ENCODE measurements at regions of chr1 and their contacts with region 1.

Region 1: DNA sequence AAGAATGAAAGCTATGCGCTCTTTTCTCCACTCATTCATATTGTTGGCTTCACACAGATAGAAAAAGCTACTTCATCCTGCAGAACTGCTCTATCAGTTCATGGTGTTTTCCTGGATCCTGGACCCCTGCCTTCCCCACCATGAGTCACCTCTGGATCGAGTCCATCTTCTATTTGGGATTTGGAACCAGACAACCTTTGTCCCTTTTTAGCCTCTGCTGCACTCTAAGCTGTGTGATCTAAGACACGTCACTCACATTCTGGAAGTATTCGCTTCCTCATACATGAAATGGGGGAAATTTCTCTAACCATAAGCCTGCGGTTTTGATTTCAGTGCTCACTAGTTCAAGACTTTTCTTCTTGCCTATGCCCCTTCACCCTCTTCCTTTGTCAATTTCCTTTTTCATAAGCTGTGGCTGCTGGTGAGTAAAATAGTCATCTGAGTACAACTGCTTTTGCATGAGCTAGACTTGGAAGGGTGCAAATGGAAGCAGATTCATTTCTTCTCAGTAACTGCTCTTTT is 14.1 kb upstream of the DEGS1 start:
- DNase-seq: peak; percentile 59
- H3K4me3 Mint-ChIP-seq: peak overlapping the region; percentile 60
- H3K27ac Mint-ChIP-seq: peak overlapping the region; percentile 76
- H3K4me1 Mint-ChIP-seq: peaks cover 38% of the 10 kb centered on the region
- H3K27me3 Mint-ChIP-seq: peaks cover 2% of the 10 kb centered on the region

Region 2: DNA sequence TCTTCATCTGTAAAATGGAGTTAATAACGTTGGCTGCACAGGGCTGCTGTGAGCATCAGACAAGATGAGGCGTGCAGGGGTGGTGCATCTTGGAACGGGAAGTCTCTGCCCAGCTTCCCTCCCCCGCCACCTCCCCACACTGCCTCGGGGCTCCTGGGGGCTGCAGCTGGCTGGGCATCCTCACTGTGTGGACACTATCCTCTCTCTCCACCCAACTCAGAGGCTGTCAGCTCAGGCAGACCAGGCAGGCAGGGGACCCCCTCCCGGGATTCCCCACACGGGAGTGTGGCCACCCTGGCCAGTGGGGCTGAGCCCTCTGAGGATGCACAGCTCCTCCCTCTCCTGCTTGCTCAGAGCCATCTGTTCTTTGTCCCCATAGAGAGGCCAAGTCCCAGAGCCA is 653.0 kb before region 1 on chr1:
- intact Hi-C with region 1: no loop called
- DNase-seq: no peak
- H3K4me3 Mint-ChIP-seq: peak overlapping the region; percentile 26
- H3K27ac Mint-ChIP-seq: peak overlapping the region; percentile 65
- H3K4me1 Mint-ChIP-seq: peaks cover 28% of the 10 kb centered on the region
- H3K27me3 Mint-ChIP-seq: peaks cover 3% of the 10 kb centered on the region

Region 3: GRCh38 chr1:223726380-223727001 is 442.4 kb before region 1 on chr1:
- intact Hi-C with region 1: loop called (anchors 1 kb)
- DNase-seq: peak; percentile 86
- H3K4me3 Mint-ChIP-seq: peak overlapping the region; percentile 77
- H3K27ac Mint-ChIP-seq: peak overlapping the region; percentile 95
- H3K4me1 Mint-ChIP-seq: peaks cover 85% of the 10 kb centered on the region
- H3K27me3 Mint-ChIP-seq: no peaks in the 10 kb centered on the region

Region 4: DNA sequence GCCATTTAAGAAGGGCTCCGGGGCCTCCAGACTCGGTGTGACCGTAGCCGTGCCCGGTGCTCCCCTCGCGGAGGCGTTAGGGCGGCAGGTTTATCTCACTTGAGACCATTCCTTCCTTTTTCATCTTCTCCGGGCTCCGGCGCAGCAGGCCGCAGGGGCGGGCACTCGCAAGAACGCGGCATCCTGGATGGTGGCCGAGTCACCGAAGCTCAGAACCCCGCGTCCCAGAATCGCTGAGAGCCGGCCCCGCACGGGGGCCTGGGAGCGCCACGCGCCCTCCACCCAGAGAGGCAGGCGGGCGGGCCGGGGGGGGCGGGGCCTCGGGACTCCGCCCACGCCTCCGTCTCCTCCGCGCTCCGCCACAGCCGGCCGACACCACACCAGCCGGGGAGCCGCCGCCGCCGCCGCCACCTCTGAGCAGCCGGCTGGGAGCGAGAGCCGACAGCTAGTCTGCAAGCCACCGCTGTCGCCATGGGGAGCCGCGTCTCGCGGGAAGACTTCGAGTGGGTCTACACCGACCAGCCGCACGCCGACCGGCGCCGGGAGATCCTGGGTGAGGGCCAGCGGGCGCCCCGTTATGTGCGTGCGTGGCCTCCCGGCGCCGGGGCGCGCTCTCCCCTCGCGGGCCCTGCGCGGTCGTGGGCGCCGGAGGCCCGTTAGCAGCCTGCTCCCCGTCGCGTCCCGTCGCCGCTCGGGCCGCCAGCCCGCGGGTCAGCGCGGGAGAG is 14.1 kb after region 1 on chr1 and contains the start of gene DEGS1:
- intact Hi-C with region 1: loop called (anchors 1 kb)
- DNase-seq: peak; percentile 80
- H3K4me3 Mint-ChIP-seq: peak within 1 kb of the TSS; percentile 96
- H3K27ac Mint-ChIP-seq: peak within 1 kb of the TSS; percentile 93
- H3K4me1 Mint-ChIP-seq: peaks cover 46% of the 10 kb centered on the region
- H3K27me3 Mint-ChIP-seq: peaks cover 3% of the 10 kb centered on the region
- total RNA-seq, gene DEGS1: 54.7 and 57.1 TPM in 2 replicates

Region 5: DNA sequence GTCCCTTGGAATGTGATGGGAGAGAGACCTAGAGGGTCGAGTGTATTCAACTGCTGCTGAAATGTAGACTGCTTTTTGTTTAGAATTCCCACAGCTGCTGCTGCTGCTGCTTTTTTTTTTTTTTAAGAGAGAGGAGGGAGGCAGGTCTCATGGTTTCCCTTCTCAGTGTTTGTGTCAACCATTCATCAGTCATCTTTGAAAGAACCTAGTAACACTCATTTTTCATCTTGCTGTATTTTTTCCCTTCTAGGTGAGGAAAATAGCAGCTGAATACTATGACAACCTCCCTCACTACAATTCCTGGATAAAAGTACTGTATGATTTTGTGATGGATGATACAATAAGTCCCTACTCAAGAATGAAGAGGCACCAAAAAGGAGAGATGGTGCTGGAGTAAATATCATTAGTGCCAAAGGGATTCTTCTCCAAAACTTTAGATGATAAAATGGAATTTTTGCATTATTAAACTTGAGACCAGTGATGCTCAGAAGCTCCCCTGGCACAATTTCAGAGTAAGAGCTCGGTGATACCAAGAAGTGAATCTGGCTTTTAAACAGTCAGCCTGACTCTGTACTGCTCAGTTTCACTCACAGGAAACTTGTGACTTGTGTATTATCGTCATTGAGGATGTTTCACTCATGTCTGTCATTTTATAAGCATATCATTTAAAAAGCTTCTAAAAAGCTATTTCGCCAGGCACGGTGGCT is 23.3 kb after region 1 on chr1:
- intact Hi-C with region 1: loop called (anchors 1 kb)
- DNase-seq: no peak
- H3K4me3 Mint-ChIP-seq: peak overlapping the region; percentile 24
- H3K27ac Mint-ChIP-seq: peak overlapping the region; percentile 79
- H3K4me1 Mint-ChIP-seq: peaks cover 22% of the 10 kb centered on the region
- H3K27me3 Mint-ChIP-seq: no peaks in the 10 kb centered on the region

Region 6: GRCh38 chr1:224203243-224204016 is 34.5 kb after region 1 on chr1:
- intact Hi-C with region 1: loop called (anchors 2 kb)
- DNase-seq: no peak
- H3K4me3 Mint-ChIP-seq: no peak overlapping the region
- H3K27ac Mint-ChIP-seq: no peak overlapping the region
- H3K4me1 Mint-ChIP-seq: peaks cover 15% of the 10 kb centered on the region
- H3K27me3 Mint-ChIP-seq: no peaks in the 10 kb centered on the region

Region 7: DNA sequence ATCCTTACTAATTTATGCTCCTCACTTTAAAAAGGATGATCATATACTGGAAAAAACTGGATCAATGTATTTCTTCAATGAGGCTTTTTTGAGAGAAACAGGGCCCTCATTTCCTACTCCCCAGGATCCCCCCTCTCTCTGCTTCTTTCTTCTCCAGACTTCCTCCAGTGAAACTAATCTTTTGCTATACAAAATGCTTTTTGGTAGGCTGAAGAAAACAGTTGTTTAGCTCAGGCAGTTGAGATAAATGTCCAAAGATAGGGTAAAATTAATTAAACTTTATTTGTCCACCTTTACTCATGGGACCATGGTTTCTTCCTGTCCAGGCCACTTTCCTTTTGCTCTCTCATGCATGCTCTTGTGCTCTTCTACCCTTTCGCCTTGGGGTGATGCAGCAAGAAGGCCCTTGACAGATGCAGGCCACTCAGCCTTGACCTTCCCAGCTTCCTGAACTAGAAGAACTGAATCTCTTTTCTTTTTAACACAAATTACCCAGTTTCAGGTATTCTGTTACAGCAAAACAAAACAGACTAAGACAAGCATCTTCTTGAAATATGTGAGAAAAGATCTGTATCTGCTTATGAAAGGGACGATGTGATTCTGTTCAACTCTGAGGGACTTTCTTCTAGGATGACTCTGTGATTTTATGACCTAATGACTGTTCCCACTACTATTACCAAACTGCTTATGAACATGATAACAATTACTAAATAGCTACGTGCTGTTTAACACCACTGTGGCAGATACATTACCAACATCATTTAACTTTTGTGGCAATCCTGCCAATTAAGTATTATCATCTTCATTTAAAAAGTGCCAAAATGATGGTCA is 97.4 kb after region 1 on chr1:
- intact Hi-C with region 1: loop called (anchors 5 kb)
- DNase-seq: no peak
- H3K4me3 Mint-ChIP-seq: no peak overlapping the region
- H3K27ac Mint-ChIP-seq: peak overlapping the region; percentile 69
- H3K4me1 Mint-ChIP-seq: peaks cover 42% of the 10 kb centered on the region
- H3K27me3 Mint-ChIP-seq: no peaks in the 10 kb centered on the region

Region 8: DNA sequence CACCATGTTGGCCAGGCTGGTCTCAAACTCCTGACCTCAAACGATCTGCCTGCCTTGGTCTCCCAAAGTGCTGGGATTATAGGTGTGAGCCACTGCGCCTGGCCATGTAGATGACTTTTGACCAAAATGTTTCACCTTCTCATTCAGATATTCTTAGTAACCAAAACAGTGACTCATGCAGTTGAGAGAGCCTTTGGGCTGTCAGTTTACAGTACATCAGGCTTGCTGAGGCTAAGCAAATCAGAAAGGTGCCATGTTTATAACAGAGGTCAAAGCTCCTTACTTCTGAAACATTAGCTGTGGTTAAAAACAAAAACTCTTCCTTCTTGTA is 208.7 kb after region 1 on chr1:
- intact Hi-C with region 1: loop called (anchors 2 kb)
- DNase-seq: no peak
- H3K4me3 Mint-ChIP-seq: peak overlapping the region; percentile 66
- H3K27ac Mint-ChIP-seq: peak overlapping the region; percentile 94
- H3K4me1 Mint-ChIP-seq: peaks cover 91% of the 10 kb centered on the region
- H3K27me3 Mint-ChIP-seq: no peaks in the 10 kb centered on the region

Measured in activated T-helper 1 cell treated with anti-CD3 and anti-CD28 coated beads, Interleukin-12 subunit alpha, Interleukin-12 subunit beta, Interleukin-2, Interleukin-4 antibody, amounts not matched to agents 30 ng/mL and 10 ng/mL and 1 ng/mL, durations not matched to agents 14 hours and 24 hours and 36 hours (primary cell).